ENCODE measurements at regions of chr6 and their contacts with region 1.

Region 1: GRCh38 chr6:57221936-57222742 is at the start of gene RAB23:
- DNase-seq: peak; percentile 91
- ATAC-seq: peak; percentile 89
- H3K4me3 Mint-ChIP-seq: peak within 1 kb of the TSS; percentile 99
- H3K27ac Mint-ChIP-seq: peak within 1 kb of the TSS; percentile 91
- H3K4me1 Mint-ChIP-seq: peaks cover 11% of the 10 kb centered on the region
- H3K27me3 Mint-ChIP-seq: peaks cover 9% of the 10 kb centered on the region
- CTCF ChIP-seq: no peak
- total RNA-seq, gene RAB23: 0.32 and 0.49 TPM in 2 replicates

Region 2: DNA sequence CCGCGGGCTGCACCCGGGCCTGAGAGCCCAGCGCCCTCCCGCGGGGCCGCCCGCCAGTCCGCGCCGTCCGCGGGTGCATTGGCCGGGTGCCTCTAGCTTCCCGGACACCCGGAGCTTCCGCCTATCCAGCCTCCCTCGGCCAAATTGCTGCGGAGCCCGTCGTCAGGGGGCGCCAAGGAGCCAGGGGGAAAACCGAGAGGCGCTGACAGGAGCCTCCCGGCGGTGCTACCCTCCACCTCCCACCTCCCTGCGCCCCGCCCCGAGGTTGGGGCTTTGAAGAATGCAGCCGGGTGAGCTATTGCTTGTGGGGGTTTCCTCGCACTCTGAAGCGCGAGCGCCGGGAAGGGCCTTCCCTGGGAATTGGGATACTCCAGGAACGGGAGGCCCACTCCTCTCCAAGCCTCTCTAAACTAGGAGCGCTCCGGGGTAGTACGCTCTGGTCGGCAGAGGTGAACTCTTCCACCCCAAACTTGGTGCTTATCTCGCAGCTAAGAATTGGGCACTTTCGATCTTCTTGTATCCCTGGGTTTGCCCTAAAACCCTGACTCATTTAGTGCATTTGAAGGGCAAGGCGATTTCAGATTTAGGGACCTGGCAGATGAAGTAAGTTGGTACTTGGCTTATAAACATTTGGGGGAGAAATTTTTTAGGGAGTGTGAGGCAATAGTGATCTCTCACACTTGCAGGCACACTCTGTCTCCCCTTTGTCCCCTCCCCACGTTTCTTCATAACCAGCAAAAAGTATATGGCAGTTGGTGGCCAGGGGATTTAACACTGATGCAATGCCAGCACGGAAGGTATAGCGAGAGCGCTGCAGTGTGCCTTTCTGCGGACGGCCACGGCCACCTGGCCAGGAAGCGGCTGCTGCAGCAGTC is 266.7 kb before region 1 on chr6:
- CTCF ChIA-PET with region 1: no interaction called
- POLR2A ChIA-PET with region 1: no interaction called
- intact Hi-C with region 1: loop called (anchors 1 kb)
- DNase-seq: peak; percentile 30
- ATAC-seq: peak; percentile 47
- H3K4me3 Mint-ChIP-seq: peak overlapping the region; percentile 71
- H3K27ac Mint-ChIP-seq: no peak overlapping the region
- H3K4me1 Mint-ChIP-seq: peaks cover 25% of the 10 kb centered on the region
- H3K27me3 Mint-ChIP-seq: peaks cover 59% of the 10 kb centered on the region
- CTCF ChIP-seq: no peak

Region 3: DNA sequence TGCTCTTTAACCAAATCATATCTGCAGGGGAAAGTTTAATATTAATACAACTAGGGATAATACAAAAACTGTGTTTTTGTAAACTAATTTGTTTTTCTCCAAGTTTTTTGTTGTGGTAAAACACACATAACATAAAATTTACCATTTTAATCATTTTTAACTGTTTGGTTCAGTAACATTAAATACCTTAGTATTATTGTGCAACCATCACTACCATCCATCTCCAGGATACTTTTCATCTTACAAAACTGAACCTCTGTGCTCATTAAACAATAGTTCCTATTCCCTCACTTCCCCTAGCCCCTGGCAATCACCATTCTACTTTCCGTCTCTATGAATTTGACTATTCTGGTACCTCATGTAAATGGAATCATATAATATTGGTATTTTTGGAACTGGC is 251.3 kb before region 1 on chr6:
- CTCF ChIA-PET with region 1: no interaction called
- POLR2A ChIA-PET with region 1: no interaction called
- intact Hi-C with region 1: no loop called
- DNase-seq: no peak
- ATAC-seq: no peak
- H3K4me3 Mint-ChIP-seq: no peak overlapping the region
- H3K27ac Mint-ChIP-seq: no peak overlapping the region
- H3K4me1 Mint-ChIP-seq: no peaks in the 10 kb centered on the region
- H3K27me3 Mint-ChIP-seq: peaks cover 2% of the 10 kb centered on the region
- CTCF ChIP-seq: no peak

Region 4: DNA sequence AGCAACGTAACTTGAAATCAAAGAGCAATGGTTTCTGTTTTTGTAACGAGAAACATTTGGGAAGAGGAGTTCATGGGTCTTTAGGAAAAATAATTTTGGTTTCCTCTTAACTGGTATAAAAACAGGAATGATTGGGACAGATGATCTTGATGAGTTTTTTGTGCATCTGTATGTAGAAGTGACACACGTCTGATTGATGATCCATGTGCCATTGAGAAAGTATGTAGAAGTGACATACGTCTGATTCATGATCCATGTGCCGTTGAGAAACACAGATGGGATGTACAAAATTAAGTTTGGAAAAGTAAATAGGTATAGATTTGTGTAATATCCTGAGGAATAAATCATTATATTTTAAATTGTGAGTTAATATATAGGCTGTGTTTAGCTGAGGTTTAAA is 173.6 kb before region 1 on chr6:
- CTCF ChIA-PET with region 1: no interaction called
- POLR2A ChIA-PET with region 1: no interaction called
- intact Hi-C with region 1: loop called (anchors 5 kb)
- DNase-seq: no peak
- ATAC-seq: no peak
- H3K4me3 Mint-ChIP-seq: no peak overlapping the region
- H3K27ac Mint-ChIP-seq: no peak overlapping the region
- H3K4me1 Mint-ChIP-seq: peaks cover 21% of the 10 kb centered on the region
- H3K27me3 Mint-ChIP-seq: no peaks in the 10 kb centered on the region
- CTCF ChIP-seq: no peak

Region 5: DNA sequence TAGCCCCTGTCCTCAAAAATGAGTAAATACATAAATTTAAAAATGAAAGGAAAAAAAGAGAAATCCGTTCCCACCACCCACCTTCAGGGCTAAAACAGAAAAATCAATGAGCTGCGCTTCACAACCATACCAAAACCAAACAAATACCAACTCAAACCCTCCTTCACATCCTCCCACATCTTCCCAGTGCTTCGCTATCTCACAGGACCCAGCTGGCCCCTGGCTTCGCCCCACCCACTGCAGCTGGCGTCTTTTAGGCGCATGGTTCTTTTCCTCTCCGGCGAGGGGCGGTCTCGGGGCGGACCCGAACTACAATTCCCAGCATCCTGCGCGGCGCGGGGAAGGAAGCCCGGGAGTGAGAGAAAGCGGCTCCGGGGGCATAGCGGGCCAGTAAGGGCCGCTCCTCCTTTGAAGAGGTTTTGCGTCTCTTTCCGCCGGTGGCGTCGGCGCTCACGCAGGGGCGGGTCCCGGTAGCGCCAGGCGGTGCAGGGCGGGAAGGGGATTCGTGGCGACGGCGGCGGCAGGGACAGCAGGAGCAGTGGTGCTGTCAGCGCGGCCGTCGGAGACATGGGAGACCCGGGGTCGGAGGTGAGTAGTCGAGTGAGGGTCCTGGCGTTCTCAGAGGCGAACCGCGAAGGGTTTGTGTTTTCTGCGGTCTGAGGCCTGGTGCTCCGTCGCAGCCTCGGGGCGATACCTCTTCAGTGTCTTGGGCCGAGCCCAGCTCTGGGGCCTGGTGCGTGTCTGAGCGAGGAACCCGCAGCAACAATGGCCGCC is 132.3 kb before region 1 on chr6 and contains the start of gene ZNF451:
- CTCF ChIA-PET with region 1: no interaction called
- POLR2A ChIA-PET with region 1: interaction called, 3 read pairs
- intact Hi-C with region 1: loop called (anchors 1 kb)
- DNase-seq: peak; percentile 94
- ATAC-seq: peak; percentile 92
- H3K4me3 Mint-ChIP-seq: peak within 1 kb of the TSS; percentile 86
- H3K27ac Mint-ChIP-seq: peak within 1 kb of the TSS; percentile 87
- H3K4me1 Mint-ChIP-seq: peaks cover 31% of the 10 kb centered on the region
- H3K27me3 Mint-ChIP-seq: no peaks in the 10 kb centered on the region
- CTCF ChIP-seq: no peak
- total RNA-seq, gene ZNF451: 66.9 and 71.9 TPM in 2 replicates

Region 6: GRCh38 chr6:57108691-57109090 is 113.4 kb before region 1 on chr6:
- CTCF ChIA-PET with region 1: no interaction called
- POLR2A ChIA-PET with region 1: no interaction called
- intact Hi-C with region 1: loop called (anchors 5 kb)
- DNase-seq: no peak
- ATAC-seq: peak; percentile 86
- H3K4me3 Mint-ChIP-seq: peak overlapping the region; percentile 16
- H3K27ac Mint-ChIP-seq: peak overlapping the region; percentile 59
- H3K4me1 Mint-ChIP-seq: peaks cover 43% of the 10 kb centered on the region
- H3K27me3 Mint-ChIP-seq: no peaks in the 10 kb centered on the region
- CTCF ChIP-seq: no peak

Region 7: DNA sequence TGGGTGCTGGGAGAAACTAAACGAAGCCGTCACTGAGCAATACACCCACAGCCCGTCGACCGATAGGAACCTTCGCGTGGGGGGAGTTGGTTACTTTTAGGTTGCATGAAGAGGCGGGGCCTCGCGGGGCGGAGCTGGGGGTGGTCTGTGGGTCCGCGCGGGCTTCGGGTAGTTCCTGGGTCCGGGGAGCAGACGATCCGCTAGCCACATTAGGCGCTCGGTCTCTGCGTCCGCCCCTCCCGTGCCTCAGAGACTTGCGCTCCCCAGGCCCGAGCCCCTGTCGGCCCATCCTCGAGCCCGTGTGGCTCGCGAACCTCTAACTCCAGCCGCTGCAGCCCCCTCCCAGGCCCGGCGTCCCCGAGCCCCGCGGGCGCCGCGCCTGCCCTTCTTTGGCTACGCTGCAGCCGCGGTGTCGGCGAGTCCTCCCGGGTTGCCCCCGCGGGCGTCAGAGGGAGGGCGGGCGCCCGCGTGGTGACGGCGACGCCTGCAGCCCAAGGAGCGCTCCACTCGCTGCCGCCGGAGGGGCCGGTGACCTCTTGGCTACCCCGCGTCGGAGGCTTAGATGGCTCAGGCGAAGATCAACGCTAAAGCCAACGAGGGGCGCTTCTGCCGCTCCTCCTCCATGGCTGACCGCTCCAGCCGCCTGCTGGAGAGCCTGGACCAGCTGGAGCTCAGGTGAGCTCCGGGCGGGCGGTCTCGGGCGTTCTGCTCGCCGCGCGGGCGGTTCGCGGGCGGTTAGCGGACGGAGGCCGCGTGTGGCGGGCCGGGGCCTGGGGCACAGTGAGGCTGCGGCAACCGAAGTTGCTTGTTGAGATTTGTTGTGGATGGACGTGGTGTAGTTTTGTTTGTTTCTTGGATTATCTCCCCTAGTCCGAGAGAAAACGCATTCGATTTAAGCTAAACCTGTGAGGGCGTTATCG is 49.7 kb before region 1 on chr6 and contains the start of gene BAG2:
- CTCF ChIA-PET with region 1: no interaction called
- POLR2A ChIA-PET with region 1: interaction called, 12 read pairs
- intact Hi-C with region 1: loop called (anchors 1 kb)
- DNase-seq: peak; percentile 86
- ATAC-seq: peak; percentile 87
- H3K4me3 Mint-ChIP-seq: peak within 1 kb of the TSS; percentile 92
- H3K27ac Mint-ChIP-seq: peak within 1 kb of the TSS; percentile 92
- H3K4me1 Mint-ChIP-seq: peaks cover 26% of the 10 kb centered on the region
- H3K27me3 Mint-ChIP-seq: no peaks in the 10 kb centered on the region
- CTCF ChIP-seq: no peak
- total RNA-seq, gene BAG2: 3.9 and 4.3 TPM in 2 replicates

Measured in activated B cell treated with CpG ODN at 0.5 μM for 24 hours (primary cell).